CD8-positive, alpha-beta memory T cell (primary cell): ENCODE measurements at regions of chr9 and their contacts with region 1.

Region 1: DNA sequence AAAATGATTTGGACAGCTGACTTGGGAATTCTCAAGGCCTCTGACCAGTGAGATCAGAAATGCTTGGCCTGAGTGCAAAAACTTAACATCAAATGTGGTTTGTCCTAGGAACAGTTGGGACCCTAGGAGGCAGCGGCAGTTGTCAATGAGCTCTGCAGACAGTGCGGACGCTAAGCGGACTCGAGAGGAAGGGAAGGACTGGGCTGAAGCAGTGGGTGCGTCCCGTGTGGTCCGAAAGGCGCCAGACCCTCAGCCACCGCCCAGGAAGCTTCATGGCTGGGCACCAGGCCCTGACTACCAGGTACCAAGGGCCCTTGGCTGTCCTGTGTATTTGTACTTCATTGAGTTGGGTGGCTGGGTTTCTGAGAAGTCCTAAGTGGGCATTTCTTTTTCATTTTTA is 43.7 kb upstream of the POMT1 start:
- DNase-seq: no peak
- H3K4me3 ChIP-seq: no peak overlapping the region
- H3K4me3 Mint-ChIP-seq: peak overlapping the region in 2 of 7 donors; percentile 32 to 43
- H3K27ac ChIP-seq: no peak overlapping the region
- H3K27ac Mint-ChIP-seq: peak overlapping the region in 5 of 8 donors; percentile 21 to 75 (median 50)
- H3K4me1 ChIP-seq: no peaks in the 10 kb centered on the region
- H3K4me1 Mint-ChIP-seq: peaks cover 8 to 21% (median 13%) of the 10 kb centered on the region in 3 donors
- H3K27me3 ChIP-seq: no peaks in the 10 kb centered on the region
- H3K27me3 Mint-ChIP-seq: no peaks in the 10 kb centered on the region

Region 2: DNA sequence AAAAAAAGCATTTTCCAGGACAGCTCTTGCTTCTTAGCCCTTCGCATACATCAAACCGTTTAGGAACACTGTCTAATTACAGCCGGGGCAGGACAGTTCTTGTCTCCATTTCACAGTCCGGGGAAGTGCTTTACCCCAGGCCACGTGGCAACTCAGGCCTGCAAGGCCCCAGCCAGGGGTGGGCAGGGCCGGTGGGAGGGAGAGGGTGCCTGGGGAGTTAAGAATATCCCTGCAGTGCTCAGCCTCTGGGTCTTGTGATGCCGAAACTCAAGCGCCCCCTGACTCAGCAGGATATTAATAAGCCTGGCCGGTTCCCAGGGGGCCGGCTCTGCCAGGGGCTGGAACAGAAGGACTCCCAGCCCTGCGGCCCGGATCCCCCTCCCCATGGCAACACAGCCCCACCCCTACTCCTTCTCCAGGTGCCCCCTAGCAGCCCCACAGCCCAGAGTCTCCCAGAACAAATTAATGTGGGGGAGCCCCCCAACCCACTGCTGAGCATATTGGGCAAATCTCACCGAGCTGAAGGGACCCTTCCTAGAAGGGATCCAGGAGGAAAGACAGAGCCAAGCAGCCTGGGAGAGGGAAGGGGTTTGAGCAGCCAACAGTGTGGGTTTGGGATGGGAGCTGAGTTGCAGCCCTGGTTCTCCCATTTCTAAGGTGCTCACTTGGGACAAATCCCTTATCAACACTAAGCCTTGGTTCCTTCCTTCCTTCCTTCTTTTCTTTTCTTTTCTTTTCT is 124.3 kb before region 1 on chr9:
- CTCF ChIA-PET with region 1: no interaction called
- POLR2A ChIA-PET with region 1: no interaction called
- DNase-seq: no peak
- H3K4me3 ChIP-seq: no peak overlapping the region
- H3K4me3 Mint-ChIP-seq: no peak overlapping the region
- H3K27ac ChIP-seq: no peak overlapping the region
- H3K27ac Mint-ChIP-seq: peak overlapping the region in 1 of 8 donors; percentile 57
- H3K4me1 ChIP-seq: no peaks in the 10 kb centered on the region
- H3K4me1 Mint-ChIP-seq: peaks cover 3 to 4% (median 4%) of the 10 kb centered on the region in 3 donors
- H3K27me3 ChIP-seq: no peaks in the 10 kb centered on the region
- H3K27me3 Mint-ChIP-seq: no peaks in the 10 kb centered on the region

Region 3: GRCh38 chr9:131565369-131565768 is 106.3 kb after region 1 on chr9:
- CTCF ChIA-PET with region 1: no interaction called
- POLR2A ChIA-PET with region 1: interaction called, 10 read pairs
- DNase-seq: no peak
- H3K4me3 ChIP-seq: no peak overlapping the region
- H3K4me3 Mint-ChIP-seq: peak overlapping the region in 1 of 7 donors; percentile 27
- H3K27ac ChIP-seq: no peak overlapping the region
- H3K27ac Mint-ChIP-seq: no peak overlapping the region
- H3K4me1 ChIP-seq: no peaks in the 10 kb centered on the region
- H3K4me1 Mint-ChIP-seq: peaks cover 0 to 4% (median under 1%) of the 10 kb centered on the region in 3 donors
- H3K27me3 ChIP-seq: no peaks in the 10 kb centered on the region
- H3K27me3 Mint-ChIP-seq: peaks cover 0 to 2% of the 10 kb centered on the region in 2 donors